Naive thymus-derived CD4-positive, alpha-beta T cell (primary cell): ENCODE measurements at regions of chr2 and their contacts with region 1.

Region 1: GRCh38 chr2:181319286-181319685 is 137.9 kb upstream of the ITGA4 start:
- DNase-seq: no peak
- ATAC-seq: no peak
- H3K4me3 ChIP-seq: no peak overlapping the region
- H3K4me3 Mint-ChIP-seq: no peak overlapping the region
- H3K27ac ChIP-seq: no peak overlapping the region
- H3K27ac Mint-ChIP-seq: peak overlapping the region in 1 of 9 donors; percentile 7
- H3K4me1 ChIP-seq: peaks cover 7 to 8% of the 10 kb centered on the region in 2 donors
- H3K4me1 Mint-ChIP-seq: peaks cover 11 to 30% (median 17%) of the 10 kb centered on the region in 7 donors
- H3K27me3 ChIP-seq: no peaks in the 10 kb centered on the region
- H3K27me3 Mint-ChIP-seq: no peaks in the 10 kb centered on the region

Region 2: GRCh38 chr2:181185948-181186347 is 133.3 kb before region 1 on chr2:
- CTCF ChIA-PET with region 1: no interaction called
- POLR2A ChIA-PET with region 1: no interaction called
- intact Hi-C with region 1: no loop called
- DNase-seq: no peak
- ATAC-seq: no peak
- H3K4me3 ChIP-seq: no peak overlapping the region
- H3K4me3 Mint-ChIP-seq: no peak overlapping the region
- H3K27ac ChIP-seq: no peak overlapping the region
- H3K27ac Mint-ChIP-seq: peak overlapping the region in 1 of 9 donors; percentile 54
- H3K4me1 ChIP-seq: peaks cover 6 to 7% of the 10 kb centered on the region in 2 donors
- H3K4me1 Mint-ChIP-seq: peaks cover 11 to 42% (median 23%) of the 10 kb centered on the region in 7 donors
- H3K27me3 ChIP-seq: no peaks in the 10 kb centered on the region
- H3K27me3 Mint-ChIP-seq: no peaks in the 10 kb centered on the region

Region 3: DNA sequence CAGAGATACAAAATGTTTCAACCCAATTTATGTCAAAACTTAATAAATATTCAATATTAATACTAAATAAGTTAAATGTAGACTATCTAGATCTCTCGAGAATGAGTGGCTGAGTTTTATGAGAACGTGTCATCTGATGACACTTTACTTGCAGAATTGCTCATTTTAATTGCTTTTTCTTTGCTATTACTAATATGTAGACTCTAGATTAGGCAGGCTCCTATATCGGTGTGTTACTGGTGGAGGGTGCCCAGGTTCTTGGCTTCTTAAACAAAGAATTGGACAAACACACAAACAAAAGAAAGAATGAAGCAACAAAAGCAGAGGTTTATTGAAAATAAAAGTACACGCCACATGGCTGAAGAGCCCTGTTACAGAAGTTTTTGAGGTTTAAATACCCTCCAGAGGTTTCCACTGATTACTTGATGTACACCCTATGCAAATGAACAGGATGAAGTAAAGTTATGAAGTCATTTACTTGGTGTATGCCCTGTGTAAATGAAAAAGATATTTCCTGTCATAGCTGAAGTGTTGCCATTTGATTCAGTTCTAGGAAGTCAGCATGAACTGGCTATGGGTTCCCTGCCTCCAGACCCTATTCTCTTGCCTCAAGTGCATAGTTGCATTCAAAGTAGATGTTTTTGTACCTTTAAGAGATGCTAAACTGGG is 15.0 kb after region 1 on chr2:
- CTCF ChIA-PET with region 1: interaction called, 4 read pairs
- POLR2A ChIA-PET with region 1: interaction called, 3 read pairs
- intact Hi-C with region 1: loop called in 1 of 2 experiments (anchors 2 kb)
- DNase-seq: no peak
- ATAC-seq: no peak
- H3K4me3 ChIP-seq: no peak overlapping the region
- H3K4me3 Mint-ChIP-seq: no peak overlapping the region
- H3K27ac ChIP-seq: no peak overlapping the region
- H3K27ac Mint-ChIP-seq: peak overlapping the region in 1 of 9 donors; percentile 9
- H3K4me1 ChIP-seq: no peaks in the 10 kb centered on the region
- H3K4me1 Mint-ChIP-seq: peaks cover 0 to 14% (median 7%) of the 10 kb centered on the region in 7 donors
- H3K27me3 ChIP-seq: no peaks in the 10 kb centered on the region
- H3K27me3 Mint-ChIP-seq: no peaks in the 10 kb centered on the region

Region 4: DNA sequence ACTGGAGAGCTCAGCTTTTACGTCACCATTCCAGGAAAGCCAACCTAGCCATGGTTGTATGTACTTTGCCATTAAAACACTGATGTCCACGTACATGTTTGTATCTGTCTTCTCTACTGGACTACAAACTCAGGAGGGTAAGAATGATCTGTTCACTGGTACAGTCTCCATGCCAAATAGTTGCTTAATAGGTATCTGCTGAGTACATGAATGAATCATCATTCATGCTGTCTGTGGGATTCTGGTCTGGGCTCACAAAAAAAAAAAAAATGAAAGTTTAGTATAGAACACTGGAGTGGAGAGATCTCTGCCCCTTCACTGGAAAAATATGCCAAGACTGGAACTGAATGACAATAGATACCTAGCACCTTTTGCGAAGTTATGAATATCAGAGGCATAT is 35.3 kb after region 1 on chr2:
- CTCF ChIA-PET with region 1: no interaction called
- POLR2A ChIA-PET with region 1: no interaction called
- intact Hi-C with region 1: loop called in 1 of 2 experiments (anchors 5 kb)
- DNase-seq: no peak
- ATAC-seq: no peak
- H3K4me3 ChIP-seq: no peak overlapping the region
- H3K4me3 Mint-ChIP-seq: no peak overlapping the region
- H3K27ac ChIP-seq: no peak overlapping the region
- H3K27ac Mint-ChIP-seq: peak overlapping the region in 1 of 9 donors; percentile 4
- H3K4me1 ChIP-seq: no peaks in the 10 kb centered on the region
- H3K4me1 Mint-ChIP-seq: peaks cover 4 to 19% (median 6%) of the 10 kb centered on the region in 7 donors
- H3K27me3 ChIP-seq: no peaks in the 10 kb centered on the region
- H3K27me3 Mint-ChIP-seq: no peaks in the 10 kb centered on the region